ENCODE measurements at regions of chr4 and their contacts with region 1.

Region 1: DNA sequence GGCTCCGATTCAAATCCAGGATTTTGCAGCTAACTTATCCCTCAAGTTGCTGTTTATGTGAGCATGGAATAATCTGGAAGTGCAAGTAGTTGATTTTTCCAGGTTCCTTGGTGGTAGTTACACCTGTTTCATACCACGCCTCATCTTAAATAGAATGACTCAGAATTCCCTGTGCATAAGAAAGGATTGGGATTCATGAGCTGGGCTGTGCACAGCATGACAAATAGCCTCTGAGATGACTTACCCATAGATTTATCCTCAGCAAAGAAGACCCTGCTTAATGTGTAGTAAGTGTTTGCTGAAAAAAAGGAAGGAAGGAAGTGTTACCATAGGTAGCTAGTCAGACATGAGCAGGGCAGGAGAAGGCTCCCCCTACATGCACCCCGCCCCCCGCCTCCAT is 777.7 kb upstream of the ADGRL3 start:
- DNase-seq: peak; percentile 41

Region 2: DNA sequence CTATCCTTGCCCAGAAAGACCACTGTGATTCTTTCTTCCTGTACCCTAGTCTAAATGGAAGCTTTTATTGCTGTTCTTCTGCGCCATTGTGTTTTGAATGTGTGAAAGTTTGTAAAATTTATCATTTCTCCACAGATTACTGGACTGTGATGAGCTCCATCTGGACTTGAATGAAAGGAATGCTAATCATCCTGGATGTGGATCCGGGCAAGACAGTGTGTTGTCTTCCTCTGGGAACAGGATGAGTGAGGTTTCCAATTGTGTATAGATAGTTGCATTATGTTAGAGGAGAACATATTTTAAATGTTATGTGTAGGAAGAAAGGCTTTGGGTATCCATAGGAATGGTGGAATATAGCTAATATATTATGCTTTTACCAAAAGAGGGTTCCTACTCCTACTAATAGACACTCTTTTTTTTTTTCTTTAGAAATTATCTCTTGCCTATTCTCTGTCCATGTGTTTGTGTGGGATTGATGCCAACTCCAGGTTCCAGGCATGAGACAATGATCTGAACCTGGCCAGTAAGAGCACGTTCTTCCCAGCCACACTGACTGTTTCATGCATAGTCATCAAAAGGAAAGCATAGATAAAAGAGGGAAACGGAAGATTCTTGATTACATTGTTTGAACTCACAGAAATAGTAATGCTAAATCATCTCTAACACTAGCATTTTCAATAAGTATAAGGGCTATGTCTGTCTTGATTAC is 25.9 kb before region 1 on chr4:
- intact Hi-C with region 1: loop called in 1 of 2 experiments (anchors 1 kb)
- DNase-seq: no peak

Measured in posterior vena cava (tissue), 2 donors.